Endothelial cell of umbilical vein (primary cell): ENCODE measurements at regions of chr5 and their contacts with region 1.

Region 1: GRCh38 chr5:94524841-94525697 is 93.3 kb downstream of the KIAA0825 start:
- DNase-seq: peak; percentile 60
- H3K4me3 ChIP-seq: no peak overlapping the region
- H3K27ac ChIP-seq: no peak overlapping the region
- H3K4me1 ChIP-seq: no peaks in the 10 kb centered on the region
- H3K27me3 ChIP-seq: no peaks in the 10 kb centered on the region
- CTCF ChIP-seq: peak; percentile 41 to 46
- POLR2A ChIP-seq: no peak

Region 2: DNA sequence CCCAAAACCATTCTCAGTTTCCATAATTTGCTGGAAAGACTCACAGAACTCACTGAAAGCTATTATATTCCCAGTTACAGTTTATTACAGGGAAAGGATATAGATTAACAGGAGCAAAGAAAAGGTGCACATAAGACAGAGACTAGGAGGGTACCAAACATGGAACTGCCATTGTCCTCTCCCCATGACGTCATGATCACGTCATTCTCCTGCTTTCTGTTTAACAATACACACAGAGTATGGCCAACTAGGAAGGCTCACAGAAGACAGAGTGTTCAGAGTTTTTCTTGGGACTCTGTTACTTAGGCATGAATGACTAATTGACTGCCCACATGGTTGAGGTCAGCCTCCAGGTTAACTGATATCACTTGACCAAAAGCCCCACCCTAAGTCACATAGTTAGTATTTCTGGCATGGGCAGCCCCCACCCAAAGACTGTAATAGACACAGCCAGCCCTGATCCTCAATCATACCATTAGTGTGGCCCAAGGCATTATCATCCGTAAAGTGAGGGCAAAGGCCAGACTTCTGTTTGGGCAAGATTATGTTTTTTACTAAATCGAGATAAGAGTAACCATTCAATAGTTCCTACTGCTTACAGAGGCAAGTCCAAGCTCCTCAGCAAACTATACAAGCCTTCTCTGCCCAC is 430.2 kb before region 1 on chr5:
- CTCF ChIA-PET with region 1: no interaction called
- POLR2A ChIA-PET with region 1: no interaction called
- dilution Hi-C with region 1: no loop called
- intact Hi-C with region 1: no loop called
- DNase-seq: no peak
- H3K4me3 ChIP-seq: no peak overlapping the region
- H3K27ac ChIP-seq: no peak overlapping the region
- H3K4me1 ChIP-seq: no peaks in the 10 kb centered on the region
- H3K27me3 ChIP-seq: no peaks in the 10 kb centered on the region
- CTCF ChIP-seq: no peak
- POLR2A ChIP-seq: no peak

Region 3: DNA sequence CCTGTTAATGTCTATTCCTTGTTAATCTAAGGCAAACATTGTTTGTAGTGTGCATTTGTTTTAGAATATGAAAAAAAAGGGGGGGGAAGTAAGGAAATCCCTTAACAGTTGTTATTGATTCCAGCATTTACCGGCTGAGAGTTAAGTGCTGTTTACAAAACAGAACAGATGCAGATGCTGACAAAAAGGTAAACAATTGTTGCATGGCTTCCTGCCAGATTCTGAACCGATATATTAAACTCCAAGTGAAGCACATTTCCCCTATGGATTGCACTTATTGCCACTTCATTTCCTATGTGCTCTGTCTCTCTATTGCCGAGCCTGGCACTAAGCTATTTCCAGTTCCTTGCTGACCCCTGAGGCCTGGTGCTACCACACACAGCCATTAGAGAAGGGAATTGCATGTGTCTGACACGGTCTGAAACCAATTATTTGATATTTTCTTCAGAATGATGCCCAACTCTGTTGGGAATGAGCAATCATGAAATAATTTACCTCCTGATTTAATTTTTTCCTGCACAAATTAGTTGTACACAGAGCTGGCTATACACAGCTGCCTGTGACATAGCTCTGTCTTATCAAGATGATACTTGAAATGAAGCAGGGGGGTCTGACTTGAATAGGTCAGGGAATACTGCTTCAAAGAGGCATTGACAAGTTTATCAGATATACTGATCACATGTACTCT is 16.5 kb before region 1 on chr5:
- CTCF ChIA-PET with region 1: interaction called, 17 read pairs
- POLR2A ChIA-PET with region 1: no interaction called
- dilution Hi-C with region 1: no loop called
- intact Hi-C with region 1: no loop called
- DNase-seq: no peak
- H3K4me3 ChIP-seq: no peak overlapping the region
- H3K27ac ChIP-seq: no peak overlapping the region
- H3K4me1 ChIP-seq: no peaks in the 10 kb centered on the region
- H3K27me3 ChIP-seq: no peaks in the 10 kb centered on the region
- CTCF ChIP-seq: no peak
- POLR2A ChIP-seq: no peak

Region 4: DNA sequence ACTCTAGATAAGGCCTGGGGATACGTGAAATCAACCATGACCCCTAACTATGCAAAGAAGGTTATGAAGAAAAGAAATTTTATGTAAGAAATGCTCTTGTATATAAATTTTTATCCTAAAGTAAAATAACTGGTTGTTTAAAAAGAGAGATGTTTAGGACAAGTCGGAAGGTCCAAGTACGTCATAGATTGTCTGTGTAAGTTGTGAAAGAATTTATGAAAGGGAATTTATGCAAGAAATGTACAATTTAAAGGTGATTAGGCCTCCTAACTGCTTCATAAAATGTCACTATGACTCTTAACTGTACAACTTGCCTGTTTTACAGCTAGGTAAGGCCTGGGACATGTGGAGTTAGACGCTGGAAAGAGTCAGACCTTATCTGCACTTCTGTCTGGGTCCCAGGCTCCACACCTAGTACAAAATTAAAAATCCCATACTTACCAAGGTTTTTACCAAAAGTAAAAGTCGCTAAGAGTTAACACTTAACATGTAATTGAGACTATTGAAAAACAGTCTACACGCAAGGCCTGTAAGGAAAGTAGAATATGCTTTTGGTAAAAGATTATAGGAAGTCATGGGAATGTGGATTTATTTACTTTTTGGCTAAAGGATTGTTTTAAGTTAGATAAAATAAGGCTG is 15.9 kb after region 1 on chr5:
- CTCF ChIA-PET with region 1: interaction called, 12 read pairs
- POLR2A ChIA-PET with region 1: no interaction called
- dilution Hi-C with region 1: no loop called
- intact Hi-C with region 1: no loop called
- DNase-seq: no peak
- H3K4me3 ChIP-seq: no peak overlapping the region
- H3K27ac ChIP-seq: no peak overlapping the region
- H3K4me1 ChIP-seq: no peaks in the 10 kb centered on the region
- H3K27me3 ChIP-seq: no peaks in the 10 kb centered on the region
- CTCF ChIP-seq: no peak
- POLR2A ChIP-seq: no peak

Region 5: GRCh38 chr5:94693043-94693822 is 168.2 kb after region 1 on chr5:
- CTCF ChIA-PET with region 1: interaction called, 30 read pairs
- POLR2A ChIA-PET with region 1: no interaction called
- dilution Hi-C with region 1: no loop called
- intact Hi-C with region 1: loop called (anchors 1 kb)
- DNase-seq: peak; percentile 65
- H3K4me3 ChIP-seq: no peak overlapping the region
- H3K27ac ChIP-seq: peak overlapping the region; percentile 29
- H3K4me1 ChIP-seq: peaks cover 15% of the 10 kb centered on the region
- H3K27me3 ChIP-seq: no peaks in the 10 kb centered on the region
- CTCF ChIP-seq: peak; percentile 13 to 19
- POLR2A ChIP-seq: peak; percentile 30

Region 6: DNA sequence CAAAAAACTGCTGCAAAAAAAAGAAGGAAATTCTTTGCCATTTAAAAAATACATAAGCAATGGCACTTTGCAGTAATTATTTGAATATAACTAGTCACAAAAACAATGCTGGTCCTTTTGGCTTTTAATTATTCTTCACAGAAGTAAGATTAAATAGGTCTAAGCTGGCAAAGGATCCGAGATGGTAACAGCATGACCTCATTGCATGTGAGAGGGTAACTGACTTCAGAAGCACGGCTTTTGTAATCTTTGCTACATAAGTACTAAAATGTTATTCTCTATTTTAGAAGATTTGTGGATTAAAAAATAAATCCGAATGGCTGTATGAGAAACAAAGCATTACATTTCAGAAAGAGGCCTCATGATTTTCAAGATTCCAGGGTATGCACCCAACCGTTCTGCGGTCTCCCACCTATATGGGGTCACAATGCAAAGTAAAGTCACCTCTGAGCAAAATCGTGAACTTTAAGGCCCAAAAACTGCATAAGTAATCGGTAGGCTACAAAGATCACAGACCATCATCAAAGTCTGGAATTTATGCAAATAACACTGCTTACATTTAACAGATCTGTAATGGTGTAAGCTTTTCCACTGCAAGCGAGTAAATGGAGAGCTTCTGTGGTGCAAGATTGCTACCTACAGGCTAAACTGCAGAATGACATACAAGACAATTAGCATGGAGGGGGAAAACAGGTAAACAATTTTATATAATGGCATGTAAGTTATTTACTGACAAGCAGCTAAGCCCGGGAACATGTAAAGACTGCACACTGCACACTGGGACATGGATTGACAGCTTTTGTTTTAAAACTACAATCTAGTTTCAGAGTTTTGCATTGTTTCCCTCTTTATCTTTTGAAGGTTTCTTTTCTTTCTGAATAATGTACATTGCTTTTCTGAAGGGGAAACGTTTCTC is 325.0 kb after region 1 on chr5:
- CTCF ChIA-PET with region 1: interaction called, 10 read pairs
- POLR2A ChIA-PET with region 1: no interaction called
- dilution Hi-C with region 1: no loop called
- intact Hi-C with region 1: loop called (anchors 10 kb)
- DNase-seq: peak; percentile 40
- H3K4me3 ChIP-seq: no peak overlapping the region
- H3K27ac ChIP-seq: no peak overlapping the region
- H3K4me1 ChIP-seq: no peaks in the 10 kb centered on the region
- H3K27me3 ChIP-seq: no peaks in the 10 kb centered on the region
- CTCF ChIP-seq: peak; percentile 27 to 33
- POLR2A ChIP-seq: no peak